Dendritic cell treated with granulocyte-macrophage colony-stimulating factor and Interleukin-4, amounts not matched to agents 40 ng/mL and 50 ng/mL, for 4 days (primary cell): ENCODE measurements at regions of chr16 and their contacts with region 1.

Region 1: GRCh38 chr16:83826146-83826913 is 18.6 kb downstream of the HSBP1 start:
- H3K4me3 Mint-ChIP-seq: no peak overlapping the region
- H3K27ac Mint-ChIP-seq: no peak overlapping the region
- H3K4me1 Mint-ChIP-seq: peaks cover 5% of the 10 kb centered on the region
- H3K27me3 Mint-ChIP-seq: peaks cover 3% of the 10 kb centered on the region

Region 2: GRCh38 chr16:83863682-83864081 is 37.4 kb after region 1 on chr16:
- intact Hi-C with region 1: no loop called
- H3K4me3 Mint-ChIP-seq: no peak overlapping the region
- H3K27ac Mint-ChIP-seq: no peak overlapping the region
- H3K4me1 Mint-ChIP-seq: peaks cover 12% of the 10 kb centered on the region
- H3K27me3 Mint-ChIP-seq: no peaks in the 10 kb centered on the region

Region 3: DNA sequence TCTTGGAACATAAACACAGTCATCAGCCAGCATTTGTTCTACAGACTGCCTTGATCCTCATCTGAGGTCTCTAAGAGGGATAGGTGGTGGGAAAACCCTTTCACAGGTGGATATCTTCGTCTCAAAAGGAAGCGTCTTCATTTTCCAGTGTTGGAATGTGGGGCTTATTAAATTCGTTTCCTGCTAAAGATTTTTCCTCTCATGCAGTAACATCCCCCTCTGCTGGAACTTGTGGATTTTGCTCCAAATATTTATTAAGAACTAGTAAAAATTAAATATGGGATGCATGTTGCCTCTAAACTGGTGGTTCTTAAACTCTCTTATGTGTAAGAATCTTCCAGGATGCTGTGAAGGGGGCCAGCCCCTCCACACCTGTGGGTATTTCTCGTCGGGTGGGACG is 52.5 kb after region 1 on chr16:
- intact Hi-C with region 1: loop called (anchors 1 kb)
- H3K4me3 Mint-ChIP-seq: no peak overlapping the region
- H3K27ac Mint-ChIP-seq: no peak overlapping the region
- H3K4me1 Mint-ChIP-seq: no peaks in the 10 kb centered on the region
- H3K27me3 Mint-ChIP-seq: peaks cover 17% of the 10 kb centered on the region